IMR-90 (cell line): ENCODE measurements at regions of chr9 and their contacts with region 1.

Region 1: GRCh38 chr9:71806901-71807307 is 38.6 kb upstream of the CEMIP2 start:
- DNase-seq: peak; percentile 67
- ATAC-seq: peak; percentile 98
- H3K4me3 ChIP-seq: no peak overlapping the region
- H3K27ac ChIP-seq: no peak overlapping the region
- H3K4me1 ChIP-seq: no peaks in the 10 kb centered on the region
- H3K27me3 ChIP-seq: peaks cover under 1% of the 10 kb centered on the region; the same call in 1 of the 2 replicates
- CTCF ChIP-seq: peak; percentile 91
- POLR2A ChIP-seq: no peak
- RAD21 ChIP-seq: peak; percentile 91

Region 2: GRCh38 chr9:71285191-71285656 is 521.7 kb before region 1 on chr9:
- CTCF ChIA-PET with region 1: no interaction called
- POLR2A ChIA-PET with region 1: no interaction called
- dilution Hi-C with region 1: no loop called
- in situ Hi-C with region 1: loop called (anchors 25 kb)
- intact Hi-C with region 1: loop called (anchors 5 kb)
- DNase-seq: peak; percentile 54
- ATAC-seq: peak; percentile 91
- H3K4me3 ChIP-seq: no peak overlapping the region
- H3K27ac ChIP-seq: no peak overlapping the region
- H3K4me1 ChIP-seq: no peaks in the 10 kb centered on the region
- H3K27me3 ChIP-seq: no peaks in the 10 kb centered on the region
- CTCF ChIP-seq: peak; percentile 82
- POLR2A ChIP-seq: no peak
- RAD21 ChIP-seq: peak; percentile 77

Region 3: GRCh38 chr9:71819115-71819739 is 12.3 kb after region 1 on chr9:
- CTCF ChIA-PET with region 1: interaction called, 11 read pairs
- POLR2A ChIA-PET with region 1: no interaction called
- dilution Hi-C with region 1: no loop called
- in situ Hi-C with region 1: no loop called
- intact Hi-C with region 1: no loop called
- DNase-seq: peak; percentile 39
- ATAC-seq: no peak
- H3K4me3 ChIP-seq: no peak overlapping the region
- H3K27ac ChIP-seq: no peak overlapping the region
- H3K4me1 ChIP-seq: no peaks in the 10 kb centered on the region
- H3K27me3 ChIP-seq: no peaks in the 10 kb centered on the region; the same call in none of the 2 replicates
- CTCF ChIP-seq: peak; percentile 81
- POLR2A ChIP-seq: no peak
- RAD21 ChIP-seq: peak; percentile 64

Region 4: DNA sequence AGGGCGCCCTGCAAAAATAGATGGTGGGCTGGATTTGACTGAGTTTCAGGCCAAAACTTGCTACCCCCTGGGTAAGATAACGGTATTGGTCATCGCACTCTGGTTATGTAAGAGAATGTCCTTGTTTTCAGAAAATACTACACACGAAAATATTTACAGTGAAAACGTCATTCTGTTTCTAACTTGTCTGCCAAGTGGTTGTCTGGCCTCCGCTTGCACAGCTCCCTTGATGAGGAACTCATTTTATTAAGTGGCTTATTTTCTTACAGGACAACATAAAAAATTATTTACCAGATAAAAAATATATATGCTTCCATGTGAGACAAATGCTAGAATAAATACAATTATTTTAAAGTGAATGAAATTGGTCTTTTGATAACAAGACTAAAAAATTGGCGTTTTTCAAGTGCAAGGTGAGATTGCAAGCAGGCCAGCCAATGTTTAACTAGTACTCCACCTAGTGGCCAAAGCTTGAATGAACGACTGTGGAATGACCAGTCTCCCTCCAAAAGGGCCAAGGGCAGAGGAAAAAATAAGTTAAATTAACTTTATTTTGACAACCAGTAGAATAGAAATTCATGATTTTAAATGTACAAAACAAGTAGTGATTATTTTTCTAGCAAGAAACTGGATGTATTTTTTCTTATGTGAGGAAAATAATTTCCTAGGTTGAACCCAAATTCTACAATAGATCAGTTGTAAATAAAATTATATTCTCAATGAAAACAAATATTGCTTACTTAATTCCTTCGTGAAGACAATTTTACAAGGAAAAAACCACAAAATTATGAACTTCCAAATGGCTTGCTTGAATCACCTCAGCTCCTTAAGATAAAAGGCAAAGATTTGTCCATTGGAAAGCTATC is 464.9 kb after region 1 on chr9:
- CTCF ChIA-PET with region 1: interaction called, 3 read pairs
- POLR2A ChIA-PET with region 1: no interaction called
- dilution Hi-C with region 1: no loop called
- in situ Hi-C with region 1: loop called (anchors 25 kb)
- intact Hi-C with region 1: loop called (anchors 1 kb)
- DNase-seq: peak; percentile 55
- ATAC-seq: peak; percentile 83
- H3K4me3 ChIP-seq: no peak overlapping the region
- H3K27ac ChIP-seq: no peak overlapping the region
- H3K4me1 ChIP-seq: no peaks in the 10 kb centered on the region
- H3K27me3 ChIP-seq: peaks cover 3% of the 10 kb centered on the region
- CTCF ChIP-seq: peak; percentile 78
- POLR2A ChIP-seq: no peak
- RAD21 ChIP-seq: peak; percentile 70